Heart right ventricle (tissue), 16 donors: ENCODE measurements at regions of chr5 and their contacts with region 1.

Region 1: GRCh38 chr5:149133795-149134780 is 7.2 kb upstream of the ABLIM3 start:
- DNase-seq: peak in 1 of 2 donors; percentile 64
- ATAC-seq: peak in 7 of 8 donors; percentile 36 to 96 (median 86)
- H3K4me3 ChIP-seq: no peak overlapping the region
- H3K27ac ChIP-seq: peak overlapping the region in 9 of 10 donors; percentile 31 to 94 (median 57)
- H3K4me1 ChIP-seq: peaks cover 3 to 60% (median 33%) of the 10 kb centered on the region in 9 donors
- H3K27me3 ChIP-seq: no peaks in the 10 kb centered on the region
- CTCF ChIP-seq: no peak

Region 2: DNA sequence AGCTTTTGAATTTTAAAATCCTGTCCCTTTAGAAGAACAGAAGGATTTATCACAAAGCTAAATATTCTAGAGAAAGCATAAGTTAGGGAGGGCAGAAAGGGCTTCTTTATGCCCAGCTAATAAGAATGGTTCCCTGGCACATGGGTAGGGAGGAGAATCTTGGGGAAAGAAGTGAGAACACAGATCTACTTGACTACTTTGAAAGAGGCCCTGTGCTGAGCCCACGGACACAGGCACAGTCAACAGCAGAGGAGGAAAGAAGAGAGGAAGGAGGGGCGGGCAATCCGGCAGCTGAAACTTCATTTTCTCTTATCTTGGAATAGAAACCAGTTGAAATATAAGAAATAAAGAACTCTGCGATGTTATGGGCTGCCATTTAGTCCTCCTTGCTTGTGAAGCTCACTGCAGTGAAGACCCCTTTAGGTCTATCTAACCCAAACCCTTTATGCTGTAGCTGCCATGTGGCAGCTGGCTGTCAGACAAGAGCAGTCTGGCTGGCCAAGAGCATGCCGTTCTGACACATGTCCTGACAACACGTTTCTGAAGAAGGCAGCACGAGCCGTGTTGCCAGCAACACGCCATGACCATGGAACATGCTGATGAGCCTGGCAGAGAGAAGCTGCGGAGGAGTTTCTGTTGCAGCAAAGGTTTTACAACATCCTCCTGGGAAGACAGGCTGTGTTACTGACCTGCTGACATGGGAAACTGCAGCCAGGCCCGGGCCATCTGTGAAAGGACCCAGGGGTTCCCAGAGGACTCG is 41.4 kb after region 1 on chr5:
- intact Hi-C with region 1: loop called in 1 of 10 experiments (anchors 2 kb)
- DNase-seq: peak; percentile 67 to 75
- ATAC-seq: peak; percentile 60 to 91 (median 82)
- H3K4me3 ChIP-seq: no peak overlapping the region
- H3K27ac ChIP-seq: peak overlapping the region; percentile 73 to 92 (median 82)
- H3K4me1 ChIP-seq: peaks cover 9 to 100% (median 85%) of the 10 kb centered on the region in 9 donors
- H3K27me3 ChIP-seq: no peaks in the 10 kb centered on the region
- CTCF ChIP-seq: no peak

Region 3: DNA sequence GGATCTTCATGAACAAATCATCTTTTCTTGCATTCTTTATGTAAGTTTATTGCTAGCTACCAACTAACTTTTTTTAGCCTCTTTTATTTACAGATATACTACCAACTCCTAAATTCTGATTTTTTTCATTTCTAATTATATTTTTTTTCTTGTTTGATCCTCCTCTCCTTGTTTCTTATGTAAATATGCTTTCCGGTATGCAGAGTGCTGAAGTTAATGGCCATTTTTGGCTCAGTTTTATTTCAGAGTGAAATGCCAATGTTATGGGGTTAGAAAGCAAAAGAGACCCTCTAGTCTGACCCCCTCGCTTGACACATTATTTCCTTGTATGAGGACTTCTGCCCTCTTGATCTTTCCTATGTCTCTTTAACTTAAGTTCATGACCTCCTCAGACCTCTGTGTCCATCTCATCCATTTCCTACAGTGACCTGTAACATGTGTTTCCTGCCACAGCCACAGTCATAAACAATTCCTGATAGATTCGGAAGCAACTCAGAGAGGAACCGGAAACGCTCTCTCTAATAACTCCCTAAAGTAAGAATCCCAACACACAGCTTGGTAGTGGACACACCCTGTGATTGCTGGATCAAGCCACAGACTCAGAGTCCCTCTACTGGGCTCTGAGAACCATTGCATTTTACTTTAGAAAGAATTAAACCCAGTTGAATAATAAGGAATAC is 94.7 kb after region 1 on chr5:
- intact Hi-C with region 1: loop called in 1 of 10 experiments (anchors 2 kb)
- DNase-seq: peak in 1 of 2 donors; percentile 77
- ATAC-seq: peak; percentile 85 to 95 (median 92)
- H3K4me3 ChIP-seq: no peak overlapping the region
- H3K27ac ChIP-seq: peak overlapping the region; percentile 42 to 79 (median 70)
- H3K4me1 ChIP-seq: peaks cover 10 to 45% (median 36%) of the 10 kb centered on the region in 9 donors
- H3K27me3 ChIP-seq: no peaks in the 10 kb centered on the region
- CTCF ChIP-seq: peak; percentile 69 to 92 (median 79)

Region 4: GRCh38 chr5:149345147-149345875 is 211.2 kb after region 1 on chr5 and contains the start of gene GRPEL2:
- intact Hi-C with region 1: loop called in 1 of 10 experiments (anchors 10 kb)
- DNase-seq: peak; percentile 96
- ATAC-seq: peak; percentile 96 to 98 (median 98)
- H3K4me3 ChIP-seq: peak within 1 kb of the TSS; percentile 61 to 95 (median 76)
- H3K27ac ChIP-seq: peak within 1 kb of the TSS; percentile 57 to 89 (median 85)
- H3K4me1 ChIP-seq: peaks cover 0 to 51% (median 35%) of the 10 kb centered on the region in 9 donors
- H3K27me3 ChIP-seq: no peaks in the 10 kb centered on the region
- CTCF ChIP-seq: peak in 1 of 9 donors; percentile 1
- total RNA-seq, gene GRPEL2: 8.1 to 13.4 (median 10.2) TPM

Region 5: GRCh38 chr5:149561848-149562247 is 427.8 kb after region 1 on chr5:
- intact Hi-C with region 1: loop called in 2 of 10 experiments (anchors 10 kb)
- DNase-seq: peak in 1 of 2 donors; percentile 34
- ATAC-seq: peak; percentile 60 to 95 (median 90)
- H3K4me3 ChIP-seq: peak overlapping the region in 5 of 10 donors; percentile 5 to 24 (median 20)
- H3K27ac ChIP-seq: peak overlapping the region; percentile 5 to 94 (median 84)
- H3K4me1 ChIP-seq: peaks cover 6 to 47% (median 39%) of the 10 kb centered on the region in 9 donors
- H3K27me3 ChIP-seq: no peaks in the 10 kb centered on the region
- CTCF ChIP-seq: no peak

Region 6: DNA sequence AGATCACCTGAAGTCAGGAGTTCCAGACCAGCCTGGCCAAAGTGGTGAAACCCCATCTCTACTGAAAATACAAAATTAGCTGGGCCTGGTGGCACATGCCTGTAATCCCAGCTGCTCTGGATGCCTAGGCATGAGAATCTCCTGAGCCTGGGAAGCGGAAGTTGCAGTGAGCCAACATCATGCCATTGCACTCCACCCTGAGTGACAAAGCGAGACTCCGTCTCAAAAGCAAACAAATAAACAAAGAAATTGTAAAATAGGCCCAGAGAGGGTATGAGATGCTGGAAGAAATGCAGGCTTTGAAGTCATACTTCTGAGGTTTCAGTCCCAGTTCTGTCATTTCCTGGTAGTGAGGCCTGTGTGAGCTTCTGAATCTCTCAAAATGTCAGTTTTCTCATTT is 441.9 kb after region 1 on chr5:
- intact Hi-C with region 1: loop called in 1 of 10 experiments (anchors 10 kb)
- DNase-seq: no peak
- ATAC-seq: no peak
- H3K4me3 ChIP-seq: no peak overlapping the region
- H3K27ac ChIP-seq: no peak overlapping the region
- H3K4me1 ChIP-seq: peaks cover 0 to 31% (median 12%) of the 10 kb centered on the region in 9 donors
- H3K27me3 ChIP-seq: peaks cover 0 to 5% (median 0%) of the 10 kb centered on the region in 7 donors
- CTCF ChIP-seq: no peak